ENCODE measurements at regions of chr10 and their contacts with region 1.

Region 1: DNA sequence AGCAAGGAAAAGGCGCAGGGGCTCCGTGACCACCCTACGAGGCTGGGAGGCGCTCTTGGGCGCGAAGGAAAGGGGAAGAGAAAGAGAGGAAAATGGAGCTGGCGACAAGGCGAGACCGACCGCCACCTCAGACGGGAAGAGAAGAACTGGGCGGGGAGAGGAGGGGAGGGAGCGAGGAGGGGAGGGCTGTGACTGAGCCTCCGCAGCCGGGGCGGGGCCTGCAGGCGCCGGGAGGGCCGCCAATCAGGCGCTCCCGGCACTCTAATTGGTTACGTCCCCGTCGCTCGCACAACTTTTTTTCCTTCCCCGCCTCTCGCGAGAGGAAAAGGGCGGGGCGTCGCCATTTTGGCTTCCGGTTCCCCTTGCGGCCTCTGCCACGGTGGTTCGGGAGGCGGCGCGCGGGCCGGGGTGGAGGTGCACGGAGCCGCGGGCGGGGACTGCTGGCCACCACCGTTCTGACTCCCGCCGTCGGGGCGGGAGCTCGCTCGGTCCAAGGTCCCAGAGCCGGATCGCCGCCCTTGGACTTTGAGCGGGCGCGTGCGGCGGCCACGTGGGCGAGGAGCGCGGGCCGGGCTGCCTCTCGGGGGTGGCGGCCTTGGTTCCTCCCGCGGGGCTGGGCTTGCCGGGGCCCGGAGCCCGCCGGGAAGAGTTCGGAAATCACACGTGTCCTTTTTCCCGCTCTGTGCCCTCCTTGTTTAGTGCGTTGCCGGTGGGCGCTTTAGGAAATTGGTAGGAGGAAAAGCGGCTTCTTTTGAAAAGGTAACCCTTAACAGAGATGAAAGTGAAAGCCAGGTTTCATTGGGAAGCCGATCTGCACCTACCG is at the start of gene GDI2:
- DNase-seq: peak; percentile 96 to 97 (median 97)
- ATAC-seq: peak; percentile 98 to 99 (median 99)
- H3K4me3 ChIP-seq: peak within 1 kb of the TSS; percentile 47 to 99 (median 94)
- H3K27ac ChIP-seq: peak within 1 kb of the TSS; percentile 91 to 100 (median 98)
- H3K4me1 ChIP-seq: peaks cover 0 to 50% (median 37%) of the 10 kb centered on the region in 12 donors
- H3K27me3 ChIP-seq: no peaks in the 10 kb centered on the region
- CTCF ChIP-seq: peak in 1 of 12 donors; percentile 4
- POLR2A ChIP-seq: peak; percentile 34 to 89
- total RNA-seq, gene GDI2: 92.0 to 161 (median 117) TPM

Region 2: GRCh38 chr10:5684318-5684970 is 129.1 kb before region 1 on chr10 and contains the start of gene TASOR2:
- intact Hi-C with region 1: loop called in 5 of 10 experiments (anchors 2 to 10 kb)
- DNase-seq: peak; percentile 98 to 100 (median 99)
- ATAC-seq: peak; percentile 98 to 99 (median 99)
- H3K4me3 ChIP-seq: peak within 1 kb of the TSS; percentile 63 to 100 (median 91)
- H3K27ac ChIP-seq: peak within 1 kb of the TSS; percentile 78 to 95 (median 92)
- H3K4me1 ChIP-seq: peaks cover 0 to 27% (median 19%) of the 10 kb centered on the region in 12 donors
- H3K27me3 ChIP-seq: peaks cover 0 to 6% (median 0%) of the 10 kb centered on the region in 9 donors
- CTCF ChIP-seq: no peak
- POLR2A ChIP-seq: peak in 1 of 2 donors; percentile 55
- total RNA-seq, gene TASOR2: 28.7 to 47.2 (median 35.5) TPM

Region 3: DNA sequence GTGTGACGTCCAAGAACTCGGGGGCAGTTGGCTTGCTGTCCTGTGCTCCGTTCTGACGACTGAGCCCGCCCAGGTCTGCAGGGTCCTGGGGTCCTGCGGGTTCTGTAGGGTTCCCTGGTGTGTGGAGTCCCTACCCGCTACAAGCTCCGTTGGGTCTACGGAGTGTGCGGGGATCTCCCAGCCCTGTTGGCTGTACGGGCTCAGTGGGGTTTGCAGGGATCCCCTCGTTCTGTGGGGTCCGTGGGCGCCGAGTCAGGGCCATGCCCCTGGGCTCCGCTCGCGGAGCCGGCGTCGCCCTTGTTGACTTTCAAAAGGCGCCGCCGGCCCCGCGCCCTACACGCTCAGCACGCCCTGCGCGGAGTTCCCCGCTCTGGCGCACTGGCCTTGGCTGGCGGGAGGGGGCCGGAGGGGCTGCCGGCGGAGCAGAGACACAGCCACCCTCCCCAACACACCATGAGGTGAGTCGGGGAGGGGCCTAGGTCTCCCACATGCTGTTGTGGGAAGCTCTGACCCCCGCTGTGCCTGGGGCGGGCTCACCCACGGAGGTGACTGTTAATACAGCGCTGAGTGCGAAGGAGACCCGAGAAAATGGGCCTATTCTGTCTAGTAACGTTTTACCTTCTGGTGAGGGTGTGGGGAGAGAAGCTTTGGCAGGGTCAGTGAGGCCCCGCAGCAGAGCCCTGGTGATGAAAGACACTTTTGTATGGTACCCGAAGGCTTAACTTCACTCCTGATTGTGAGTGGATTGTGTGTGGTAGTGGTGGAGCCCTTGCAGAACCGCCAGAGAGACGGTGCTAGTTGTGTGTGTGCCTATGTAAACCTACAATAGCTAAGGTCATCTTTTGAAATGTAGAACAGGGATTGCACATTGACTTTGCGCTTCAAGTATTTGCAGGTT is 120.8 kb before region 1 on chr10:
- intact Hi-C with region 1: loop called in 5 of 10 experiments (anchors 5 to 10 kb)
- DNase-seq: peak; percentile 42 to 67 (median 48)
- ATAC-seq: peak; percentile 44 to 90 (median 85)
- H3K4me3 ChIP-seq: peak overlapping the region; percentile 7 to 67 (median 54)
- H3K27ac ChIP-seq: peak overlapping the region in 7 of 12 donors; percentile 1 to 55 (median 27)
- H3K4me1 ChIP-seq: peaks cover 0 to 43% (median 23%) of the 10 kb centered on the region in 12 donors
- H3K27me3 ChIP-seq: no peaks in the 10 kb centered on the region
- CTCF ChIP-seq: no peak
- POLR2A ChIP-seq: no peak

Region 4: DNA sequence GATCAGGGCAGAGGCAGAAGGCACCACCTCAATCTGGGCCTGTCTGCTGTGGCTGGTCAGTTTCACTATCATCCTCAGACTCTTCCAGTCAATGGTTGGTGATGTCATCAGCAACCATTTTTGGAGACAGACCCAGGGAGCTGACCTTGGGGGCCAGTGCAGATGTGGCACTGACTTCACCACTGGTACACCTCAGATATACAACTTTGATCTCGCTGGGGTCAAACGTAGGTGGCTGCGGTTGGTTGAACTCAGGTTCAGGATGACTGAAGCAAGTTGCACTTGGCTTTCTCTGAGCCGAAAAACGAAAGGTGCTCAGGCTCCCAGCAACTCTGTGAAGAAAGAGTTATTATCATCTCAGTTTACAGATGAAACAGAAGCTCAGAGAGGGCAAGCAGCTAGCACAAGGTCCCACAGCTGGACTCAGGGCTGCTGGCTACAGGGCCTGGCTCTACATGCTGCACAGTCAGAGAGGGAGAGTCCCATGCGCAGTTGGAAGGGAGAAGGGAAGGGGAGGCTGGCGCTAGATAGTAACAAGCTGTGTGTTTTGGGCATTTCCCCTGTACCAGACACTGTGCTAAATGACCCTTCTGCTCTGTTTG is 49.0 kb after region 1 on chr10:
- intact Hi-C with region 1: no loop called
- DNase-seq: no peak
- ATAC-seq: peak in 1 of 4 donors; percentile 31
- H3K4me3 ChIP-seq: no peak overlapping the region
- H3K27ac ChIP-seq: no peak overlapping the region
- H3K4me1 ChIP-seq: no peaks in the 10 kb centered on the region
- H3K27me3 ChIP-seq: no peaks in the 10 kb centered on the region
- CTCF ChIP-seq: no peak
- POLR2A ChIP-seq: no peak

Region 5: GRCh38 chr10:5889624-5890451 is 76.3 kb after region 1 on chr10 and contains the starts of genes ANKRD16 and FBH1:
- intact Hi-C with region 1: loop called in 5 of 10 experiments (anchors 1 to 5 kb)
- DNase-seq: peak; percentile 99 to 100 (median 99)
- ATAC-seq: peak; percentile 94 to 97 (median 94)
- H3K4me3 ChIP-seq: peak within 1 kb of the TSS; percentile 62 to 99 (median 84)
- H3K27ac ChIP-seq: peak within 1 kb of the TSS; percentile 76 to 92 (median 87)
- H3K4me1 ChIP-seq: peaks cover 0 to 68% (median 53%) of the 10 kb centered on the region in 12 donors
- H3K27me3 ChIP-seq: no peaks in the 10 kb centered on the region
- CTCF ChIP-seq: peak in 1 of 12 donors; percentile 6
- POLR2A ChIP-seq: peak; percentile 67 to 81
- total RNA-seq, gene ANKRD16: 1.7 to 5.0 (median 2.9) TPM
- total RNA-seq, gene FBH1: 57.4 to 111 (median 83.5) TPM